Activated B cell treated with CpG ODN at 0.5 μM for 24 hours (primary cell): ENCODE measurements at regions of chr10 and their contacts with region 1.

Region 1: DNA sequence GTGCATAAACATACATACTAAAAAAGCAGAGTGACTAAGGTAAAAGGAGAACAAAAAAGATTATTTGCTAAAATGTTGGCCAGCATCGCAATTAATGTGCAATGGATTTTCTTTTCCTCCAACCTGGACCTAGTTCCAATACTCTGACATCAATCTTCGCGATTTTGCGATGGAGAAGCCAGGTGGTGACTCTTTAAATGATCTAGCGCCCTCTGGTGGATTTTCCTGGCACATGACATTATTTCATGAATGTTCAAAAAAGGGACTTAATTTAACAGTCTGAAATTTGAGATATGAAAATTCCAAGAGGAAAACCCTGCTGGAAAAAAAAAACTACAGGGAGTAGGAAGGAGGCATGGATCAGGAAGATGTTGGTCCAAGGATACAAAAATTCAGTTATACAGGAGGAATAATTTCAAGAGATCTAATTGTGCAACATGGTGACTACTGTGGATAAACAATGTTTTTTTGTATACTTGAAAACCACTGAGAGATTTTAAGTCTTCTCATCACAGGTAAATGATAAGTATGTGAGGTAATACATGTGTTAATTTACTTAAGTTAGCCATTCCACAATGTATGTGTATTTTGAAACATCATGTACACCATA is 4.3 kb upstream of the KCNMA1 start:
- DNase-seq: no peak
- ATAC-seq: no peak
- H3K4me3 Mint-ChIP-seq: no peak overlapping the region
- H3K27ac Mint-ChIP-seq: no peak overlapping the region
- H3K4me1 Mint-ChIP-seq: peaks cover 15% of the 10 kb centered on the region
- H3K27me3 Mint-ChIP-seq: peaks cover 33% of the 10 kb centered on the region
- CTCF ChIP-seq: peak; percentile 74

Region 2: GRCh38 chr10:77165445-77166208 is 476.3 kb before region 1 on chr10:
- CTCF ChIA-PET with region 1: interaction called, 187 read pairs
- POLR2A ChIA-PET with region 1: no interaction called
- intact Hi-C with region 1: loop called (anchors 1 kb)
- DNase-seq: no peak
- ATAC-seq: peak; percentile 40
- H3K4me3 Mint-ChIP-seq: peak overlapping the region; percentile 17
- H3K27ac Mint-ChIP-seq: no peak overlapping the region
- H3K4me1 Mint-ChIP-seq: peaks cover 2% of the 10 kb centered on the region
- H3K27me3 Mint-ChIP-seq: peaks cover 19% of the 10 kb centered on the region
- CTCF ChIP-seq: no peak

Region 3: DNA sequence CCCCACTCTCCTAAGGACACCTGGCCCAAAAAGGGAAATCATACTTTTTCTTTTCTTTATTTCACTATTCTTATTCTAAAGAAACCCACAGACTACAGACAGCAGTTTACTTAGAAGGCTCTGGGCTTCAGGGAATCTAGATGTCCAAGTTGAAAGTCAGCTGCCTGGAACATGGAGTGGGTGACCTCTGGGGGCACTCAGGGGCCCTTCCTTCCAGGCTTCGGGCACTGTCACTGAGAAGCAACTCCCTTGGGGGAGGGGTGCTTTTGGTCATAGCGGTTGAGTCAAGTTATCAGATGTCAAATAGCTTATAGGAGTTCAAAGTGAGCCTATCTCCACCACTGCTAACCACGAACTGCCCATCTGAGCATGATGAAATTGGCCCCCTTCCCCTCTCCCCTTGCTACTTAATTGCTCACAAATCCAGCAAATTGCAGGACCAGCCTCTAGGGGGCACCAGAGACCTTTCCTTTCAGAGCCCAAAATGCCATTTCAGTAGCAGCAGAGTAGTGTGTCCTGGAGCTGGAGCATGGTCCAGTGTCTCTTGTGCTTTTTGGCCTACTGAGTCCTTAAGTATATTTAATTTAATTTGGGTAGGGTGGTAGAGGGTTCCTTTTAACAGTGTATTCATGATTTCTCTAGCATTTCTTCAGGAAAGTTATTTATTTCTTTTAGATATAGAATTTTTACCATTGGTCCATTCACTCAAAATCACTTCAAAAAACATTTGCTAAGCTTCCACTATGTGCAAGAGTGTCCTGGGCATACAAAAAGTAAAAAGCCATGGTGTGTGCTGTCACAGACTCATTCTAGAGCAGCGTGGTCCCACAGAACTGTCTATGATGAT is 468.1 kb before region 1 on chr10:
- CTCF ChIA-PET with region 1: interaction called, 187 read pairs
- POLR2A ChIA-PET with region 1: no interaction called
- intact Hi-C with region 1: loop called (anchors 1 kb)
- DNase-seq: peak; percentile 45
- ATAC-seq: peak; percentile 40
- H3K4me3 Mint-ChIP-seq: no peak overlapping the region
- H3K27ac Mint-ChIP-seq: no peak overlapping the region
- H3K4me1 Mint-ChIP-seq: no peaks in the 10 kb centered on the region
- H3K27me3 Mint-ChIP-seq: peaks cover 6% of the 10 kb centered on the region
- CTCF ChIP-seq: peak; percentile 89

Region 4: GRCh38 chr10:77251297-77252013 is 390.4 kb before region 1 on chr10:
- CTCF ChIA-PET with region 1: interaction called, 9 read pairs
- POLR2A ChIA-PET with region 1: no interaction called
- intact Hi-C with region 1: loop called (anchors 1 kb)
- DNase-seq: no peak
- ATAC-seq: no peak
- H3K4me3 Mint-ChIP-seq: no peak overlapping the region
- H3K27ac Mint-ChIP-seq: no peak overlapping the region
- H3K4me1 Mint-ChIP-seq: no peaks in the 10 kb centered on the region
- H3K27me3 Mint-ChIP-seq: peaks cover 8% of the 10 kb centered on the region
- CTCF ChIP-seq: no peak

Region 5: GRCh38 chr10:77391605-77392235 is 250.2 kb before region 1 on chr10:
- CTCF ChIA-PET with region 1: interaction called, 6 read pairs
- POLR2A ChIA-PET with region 1: no interaction called
- intact Hi-C with region 1: loop called (anchors 1 kb)
- DNase-seq: no peak
- ATAC-seq: no peak
- H3K4me3 Mint-ChIP-seq: no peak overlapping the region
- H3K27ac Mint-ChIP-seq: no peak overlapping the region
- H3K4me1 Mint-ChIP-seq: no peaks in the 10 kb centered on the region
- H3K27me3 Mint-ChIP-seq: peaks cover 3% of the 10 kb centered on the region
- CTCF ChIP-seq: no peak

Region 6: GRCh38 chr10:77494327-77494726 is 147.6 kb before region 1 on chr10:
- CTCF ChIA-PET with region 1: no interaction called
- POLR2A ChIA-PET with region 1: no interaction called
- intact Hi-C with region 1: loop called (anchors 1 kb)
- DNase-seq: no peak
- ATAC-seq: no peak
- H3K4me3 Mint-ChIP-seq: no peak overlapping the region
- H3K27ac Mint-ChIP-seq: no peak overlapping the region
- H3K4me1 Mint-ChIP-seq: peaks cover 17% of the 10 kb centered on the region
- H3K27me3 Mint-ChIP-seq: no peaks in the 10 kb centered on the region
- CTCF ChIP-seq: no peak